Activated CD4-positive, alpha-beta memory T cell treated with anti-CD3 and anti-CD28 coated beads for 36 hours (primary cell): ENCODE measurements at regions of chr2 and their contacts with region 1.

Region 1: DNA sequence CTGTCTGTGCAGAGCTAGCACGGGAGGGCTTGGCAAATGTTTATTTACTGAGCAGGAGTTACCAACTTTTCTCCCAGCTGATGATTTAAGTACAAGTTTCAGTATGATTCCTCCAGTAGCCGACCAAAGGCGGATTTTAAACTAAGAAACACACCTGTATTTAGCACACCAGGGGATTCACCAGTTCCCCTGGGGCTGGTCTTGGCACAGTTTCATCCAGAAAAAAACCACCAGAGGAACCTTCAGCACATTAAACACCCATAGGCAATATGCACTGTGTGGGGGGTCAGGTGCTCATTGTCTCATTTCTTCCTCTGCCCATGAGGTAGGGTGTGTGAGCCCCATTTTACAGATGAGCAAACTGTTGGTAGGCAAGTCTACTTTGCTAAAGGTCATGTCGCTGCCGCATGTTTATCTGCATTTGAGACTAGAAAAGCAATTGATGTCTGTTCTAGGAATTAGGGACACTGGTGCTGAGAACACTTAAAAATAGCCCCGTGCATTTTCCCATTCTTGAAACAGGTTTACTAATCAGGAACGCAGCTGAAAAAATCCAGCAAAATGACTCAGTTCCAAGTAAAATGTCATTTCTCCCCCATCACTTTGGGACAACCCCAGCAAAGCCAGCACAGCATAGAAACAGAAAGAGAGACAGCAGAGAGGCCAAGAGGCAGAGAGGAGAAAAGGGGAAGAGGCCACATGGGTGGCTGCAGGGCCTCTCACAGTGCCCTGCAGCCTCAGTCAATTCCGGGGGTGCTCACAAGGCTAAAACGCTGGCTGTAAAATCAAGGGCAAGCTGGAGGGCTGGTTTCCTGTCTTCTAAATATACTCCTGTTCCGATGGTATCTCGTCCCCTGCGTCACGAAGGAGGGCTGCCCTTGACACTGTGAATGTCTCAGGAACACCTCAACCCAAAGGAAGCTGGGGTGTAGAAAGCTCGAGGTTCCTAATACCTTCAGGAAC is 166.8 kb upstream of the ID2 start:
- DNase-seq: peak; percentile 82
- H3K4me3 Mint-ChIP-seq: peak overlapping the region; percentile 59
- H3K27ac Mint-ChIP-seq: peak overlapping the region; percentile 98
- H3K4me1 Mint-ChIP-seq: peaks cover 66% of the 10 kb centered on the region
- H3K27me3 Mint-ChIP-seq: no peaks in the 10 kb centered on the region

Region 2: DNA sequence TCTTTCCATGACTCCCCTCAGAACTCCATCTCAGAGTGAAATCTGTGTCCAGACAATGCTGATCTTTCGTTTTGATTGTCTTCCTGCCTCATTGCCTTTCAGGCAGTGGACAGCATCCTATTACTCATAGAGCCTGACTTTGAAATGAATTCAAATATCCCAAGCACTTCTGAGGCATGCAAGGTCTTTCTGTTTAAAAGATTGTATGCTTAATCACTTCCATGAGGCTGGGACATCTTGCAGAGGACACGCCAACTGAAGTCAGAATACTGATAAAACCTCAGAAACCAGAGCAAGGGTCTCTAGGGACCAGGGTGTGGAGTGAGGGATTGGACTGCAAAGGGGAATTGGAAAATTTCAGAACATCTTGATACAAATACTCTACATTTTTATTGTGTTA is 669.7 kb before region 1 on chr2:
- CTCF ChIA-PET with region 1: no interaction called
- POLR2A ChIA-PET with region 1: no interaction called
- intact Hi-C with region 1: loop called (anchors 1 kb)
- DNase-seq: no peak
- H3K4me3 Mint-ChIP-seq: no peak overlapping the region
- H3K27ac Mint-ChIP-seq: no peak overlapping the region
- H3K4me1 Mint-ChIP-seq: peaks cover 36% of the 10 kb centered on the region
- H3K27me3 Mint-ChIP-seq: peaks cover 7% of the 10 kb centered on the region

Region 3: GRCh38 chr2:8408560-8409460 is 106.3 kb before region 1 on chr2:
- CTCF ChIA-PET with region 1: no interaction called
- POLR2A ChIA-PET with region 1: interaction called, 11 read pairs
- intact Hi-C with region 1: loop called (anchors 1 kb)
- DNase-seq: peak; percentile 91
- H3K4me3 Mint-ChIP-seq: peak overlapping the region; percentile 0
- H3K27ac Mint-ChIP-seq: peak overlapping the region; percentile 79
- H3K4me1 Mint-ChIP-seq: peaks cover 34% of the 10 kb centered on the region
- H3K27me3 Mint-ChIP-seq: no peaks in the 10 kb centered on the region

Region 4: DNA sequence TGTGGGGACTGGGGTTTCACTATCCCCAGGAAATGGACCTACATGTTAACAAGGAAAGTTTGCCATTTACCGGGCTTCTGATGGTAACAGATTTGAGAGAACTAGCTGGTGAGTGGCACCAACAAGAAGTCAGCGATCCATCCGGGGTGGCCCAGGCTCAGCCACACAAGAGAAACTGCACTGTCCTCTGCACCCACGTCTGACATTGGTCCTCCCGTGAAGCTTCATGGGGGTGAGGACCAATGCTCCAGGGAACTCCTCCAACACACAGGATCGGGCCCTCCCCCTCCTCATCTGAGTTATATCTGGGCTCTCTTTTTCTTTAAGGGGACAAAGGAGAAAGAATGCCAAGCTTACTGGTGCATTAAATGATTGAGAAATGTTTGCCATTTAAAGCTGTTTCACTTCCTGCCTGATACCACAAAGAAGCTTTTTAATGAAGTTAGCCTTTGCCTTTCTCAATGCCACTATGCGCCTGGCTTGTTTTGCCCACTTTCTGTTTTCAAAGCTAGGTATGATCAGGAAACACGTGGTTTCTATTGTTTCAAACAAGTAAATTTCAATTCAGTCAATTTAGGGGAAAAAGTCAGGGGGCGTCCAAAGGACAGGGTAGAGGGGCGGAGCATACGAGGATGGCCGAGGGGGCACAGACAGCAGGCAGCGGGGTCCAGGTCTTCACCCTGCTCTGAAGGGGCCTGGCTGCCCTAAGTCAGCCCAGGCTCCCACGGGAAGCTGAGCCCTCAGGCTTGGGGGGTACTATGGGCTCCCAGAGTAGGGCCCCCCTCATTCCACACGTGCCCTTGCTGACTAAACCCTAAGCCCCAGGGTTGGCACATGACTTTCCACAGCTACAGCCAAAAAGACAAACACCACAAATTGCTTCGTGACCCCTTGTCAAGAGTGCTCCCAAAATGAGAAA is 37.3 kb before region 1 on chr2:
- CTCF ChIA-PET with region 1: interaction called, 3 read pairs
- POLR2A ChIA-PET with region 1: interaction called, 18 read pairs
- intact Hi-C with region 1: loop called (anchors 1 kb)
- DNase-seq: peak; percentile 51
- H3K4me3 Mint-ChIP-seq: peak overlapping the region; percentile 60
- H3K27ac Mint-ChIP-seq: peak overlapping the region; percentile 90
- H3K4me1 Mint-ChIP-seq: peaks cover 91% of the 10 kb centered on the region
- H3K27me3 Mint-ChIP-seq: no peaks in the 10 kb centered on the region

Region 5: GRCh38 chr2:8525582-8526402 is 10.7 kb after region 1 on chr2:
- CTCF ChIA-PET with region 1: interaction called, 3 read pairs
- POLR2A ChIA-PET with region 1: no interaction called
- intact Hi-C with region 1: loop called (anchors 1 kb)
- DNase-seq: no peak
- H3K4me3 Mint-ChIP-seq: no peak overlapping the region
- H3K27ac Mint-ChIP-seq: no peak overlapping the region
- H3K4me1 Mint-ChIP-seq: peaks cover 30% of the 10 kb centered on the region
- H3K27me3 Mint-ChIP-seq: no peaks in the 10 kb centered on the region

Region 6: DNA sequence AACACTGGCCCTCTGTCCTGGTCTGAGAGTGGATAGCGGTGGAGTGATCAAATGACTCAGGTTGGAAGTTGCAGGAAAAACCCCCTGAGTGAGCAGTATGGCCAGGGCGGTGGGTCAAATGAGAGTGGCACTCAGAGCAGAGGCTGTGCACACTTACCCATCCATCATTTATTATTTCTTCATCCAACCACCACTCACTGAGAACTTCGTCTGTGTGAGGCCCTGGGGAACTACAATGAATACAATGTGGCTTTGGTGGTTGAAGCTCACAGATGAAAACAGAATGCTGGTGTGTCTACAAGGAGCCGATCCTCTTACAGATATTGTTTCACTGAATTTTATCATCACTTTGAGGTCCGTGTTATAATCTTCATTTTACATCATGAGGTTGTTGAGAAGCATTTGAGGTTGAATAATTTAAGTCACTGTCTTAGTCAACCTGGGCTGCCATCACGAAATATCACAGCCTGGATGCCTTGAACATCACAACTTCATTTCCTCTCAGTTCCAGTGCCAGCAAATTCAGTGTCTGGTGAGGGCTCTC is 93.4 kb after region 1 on chr2:
- CTCF ChIA-PET with region 1: no interaction called
- POLR2A ChIA-PET with region 1: interaction called, 3 read pairs
- intact Hi-C with region 1: loop called (anchors 1 kb)
- DNase-seq: peak; percentile 67
- H3K4me3 Mint-ChIP-seq: no peak overlapping the region
- H3K27ac Mint-ChIP-seq: peak overlapping the region; percentile 72
- H3K4me1 Mint-ChIP-seq: peaks cover 34% of the 10 kb centered on the region
- H3K27me3 Mint-ChIP-seq: no peaks in the 10 kb centered on the region